ENCODE measurements at regions of chr16 and their contacts with region 1.

Region 1: DNA sequence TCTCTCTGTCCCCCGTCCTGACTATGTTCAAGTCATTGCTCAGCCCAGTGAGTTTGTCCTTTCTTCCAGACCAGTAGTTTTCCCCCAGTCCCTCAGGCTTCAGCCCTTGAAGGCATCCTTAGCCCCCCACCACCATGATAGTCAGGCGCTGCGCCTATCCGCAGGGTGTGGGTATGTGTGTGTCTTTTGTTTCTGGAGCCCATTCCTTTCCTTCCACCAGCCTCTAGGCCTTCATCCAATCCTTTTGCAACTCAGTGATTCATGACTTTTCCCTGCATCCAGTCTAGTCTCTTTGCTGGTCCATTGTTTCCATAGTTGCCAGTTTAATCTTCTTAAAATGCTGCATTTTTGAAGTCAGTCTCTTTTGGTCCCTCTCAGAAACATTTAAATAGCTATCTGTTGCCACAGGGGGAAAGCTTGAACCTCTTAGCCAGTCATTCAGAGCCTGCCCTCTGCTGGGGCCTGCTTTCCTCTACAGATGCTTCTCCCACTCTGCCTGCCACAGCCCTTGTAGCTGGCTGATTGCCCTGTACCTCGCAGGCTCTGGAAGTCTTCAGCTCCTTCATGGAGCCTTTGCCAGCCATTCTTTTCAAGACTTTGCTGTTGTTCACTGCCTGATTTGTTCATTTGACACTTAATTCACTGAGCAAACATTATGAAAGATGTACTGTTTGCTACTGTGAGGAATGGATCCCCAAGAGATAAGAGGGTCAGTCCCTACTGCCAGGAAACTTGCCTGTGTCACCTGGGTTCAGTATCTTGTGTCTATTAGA is 55.9 kb upstream of the ADCY7 start:
- DNase-seq: peak; percentile 76
- H3K4me3 ChIP-seq: no peak overlapping the region
- H3K27ac ChIP-seq: peak overlapping the region; percentile 46
- H3K4me1 ChIP-seq: peaks cover 20% of the 10 kb centered on the region
- H3K27me3 ChIP-seq: no peaks in the 10 kb centered on the region
- CTCF ChIP-seq: peak; percentile 66

Region 2: GRCh38 chr16:50152807-50153452 is 57.5 kb before region 1 on chr16 and contains the start of gene TENT4B:
- intact Hi-C with region 1: loop called (anchors 5 kb)
- DNase-seq: peak; percentile 92
- H3K4me3 ChIP-seq: peak within 1 kb of the TSS; percentile 88
- H3K27ac ChIP-seq: peak within 1 kb of the TSS; percentile 89
- H3K4me1 ChIP-seq: no peaks in the 10 kb centered on the region
- H3K27me3 ChIP-seq: no peaks in the 10 kb centered on the region
- CTCF ChIP-seq: no peak
- total RNA-seq, gene TENT4B: 13.5 to 15.6 TPM